Calu3 (cell line): ENCODE measurements at regions of chr5 and their contacts with region 1.

Region 1: GRCh38 chr5:121870489-121870888 is 18.8 kb downstream of the FTMT start:
- DNase-seq: no peak
- H3K4me3 Mint-ChIP-seq: no peak overlapping the region
- H3K27ac Mint-ChIP-seq: no peak overlapping the region
- H3K4me1 Mint-ChIP-seq: no peaks in the 10 kb centered on the region
- H3K27me3 Mint-ChIP-seq: no peaks in the 10 kb centered on the region
- CTCF ChIP-seq: no peak

Region 2: DNA sequence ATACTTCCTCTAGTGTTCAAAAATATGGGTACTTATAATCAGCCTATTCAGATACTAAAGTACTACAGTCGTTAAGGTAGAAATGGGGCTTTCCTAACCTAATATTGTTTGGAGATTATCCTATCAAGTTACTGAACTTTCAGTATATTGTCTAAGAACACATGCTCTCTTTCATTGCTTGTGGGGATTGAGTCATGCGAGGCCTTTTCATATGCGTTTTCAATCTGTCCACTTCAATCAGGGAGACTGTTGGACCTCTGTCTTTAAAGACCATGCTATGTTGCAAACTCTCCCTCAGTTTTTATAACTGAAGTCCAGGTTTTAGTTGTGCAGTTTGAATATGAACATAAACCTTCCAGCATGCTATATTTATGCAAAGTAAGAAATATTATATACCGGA is 1391.4 kb before region 1 on chr5:
- CTCF ChIA-PET with region 1: no interaction called
- intact Hi-C with region 1: loop called (anchors 10 kb)
- DNase-seq: no peak
- H3K4me3 Mint-ChIP-seq: no peak overlapping the region
- H3K27ac Mint-ChIP-seq: no peak overlapping the region
- H3K4me1 Mint-ChIP-seq: peaks cover 16% of the 10 kb centered on the region
- H3K27me3 Mint-ChIP-seq: no peaks in the 10 kb centered on the region
- CTCF ChIP-seq: no peak

Region 3: GRCh38 chr5:120817044-120817985 is 1053.2 kb before region 1 on chr5:
- CTCF ChIA-PET with region 1: no interaction called
- intact Hi-C with region 1: loop called (anchors 1 kb)
- DNase-seq: peak; percentile 36
- H3K4me3 Mint-ChIP-seq: no peak overlapping the region
- H3K27ac Mint-ChIP-seq: no peak overlapping the region
- H3K4me1 Mint-ChIP-seq: no peaks in the 10 kb centered on the region
- H3K27me3 Mint-ChIP-seq: no peaks in the 10 kb centered on the region
- CTCF ChIP-seq: peak; percentile 23

Region 4: GRCh38 chr5:121630402-121630801 is 240.1 kb before region 1 on chr5:
- CTCF ChIA-PET with region 1: no interaction called
- intact Hi-C with region 1: loop called (anchors 10 kb)
- DNase-seq: no peak
- H3K4me3 Mint-ChIP-seq: no peak overlapping the region
- H3K27ac Mint-ChIP-seq: no peak overlapping the region
- H3K4me1 Mint-ChIP-seq: peaks cover 11% of the 10 kb centered on the region
- H3K27me3 Mint-ChIP-seq: no peaks in the 10 kb centered on the region
- CTCF ChIP-seq: no peak

Region 5: DNA sequence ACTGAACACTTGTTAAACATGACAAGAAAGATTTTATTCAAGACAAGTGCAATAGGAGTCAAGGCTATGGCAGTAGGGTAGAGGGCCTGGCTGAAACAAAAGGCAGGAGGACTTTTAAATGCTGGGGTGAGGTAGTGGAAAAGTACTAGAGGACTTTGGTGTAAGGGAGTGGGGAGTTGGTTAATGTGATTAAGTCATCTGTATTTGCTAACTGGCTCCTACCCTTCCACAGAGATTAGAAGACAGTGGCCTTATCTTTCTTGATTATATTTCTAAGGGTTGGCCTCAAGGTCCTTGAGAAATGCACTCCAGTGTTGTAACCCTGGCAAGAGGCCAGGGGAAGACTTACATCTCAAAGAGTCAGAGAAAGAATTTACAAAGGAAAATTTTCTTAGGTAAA is 179.0 kb before region 1 on chr5:
- CTCF ChIA-PET with region 1: no interaction called
- intact Hi-C with region 1: loop called (anchors 5 kb)
- DNase-seq: peak; percentile 32
- H3K4me3 Mint-ChIP-seq: no peak overlapping the region
- H3K27ac Mint-ChIP-seq: peak overlapping the region; percentile 69
- H3K4me1 Mint-ChIP-seq: peaks cover 47% of the 10 kb centered on the region
- H3K27me3 Mint-ChIP-seq: no peaks in the 10 kb centered on the region
- CTCF ChIP-seq: no peak

Region 6: DNA sequence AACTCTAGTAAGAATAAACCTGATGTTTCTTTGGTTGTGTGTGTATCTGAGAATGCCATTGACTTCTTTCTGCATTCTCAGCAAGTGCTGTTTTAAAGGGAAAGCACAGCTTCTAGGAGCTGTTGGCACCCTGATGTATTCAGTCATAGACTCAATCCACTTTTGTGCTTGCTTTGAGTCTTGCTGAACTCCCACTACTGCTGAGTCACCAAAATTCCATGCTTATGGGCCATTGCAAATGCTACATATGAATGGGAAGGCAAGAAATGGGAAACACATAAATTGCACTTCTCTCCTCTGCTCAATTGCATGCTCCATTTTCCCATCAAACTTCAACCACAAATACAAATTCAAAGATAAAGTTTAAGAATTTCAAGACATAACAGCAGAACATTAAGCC is 28.6 kb before region 1 on chr5:
- CTCF ChIA-PET with region 1: no interaction called
- intact Hi-C with region 1: no loop called
- DNase-seq: no peak
- H3K4me3 Mint-ChIP-seq: no peak overlapping the region
- H3K27ac Mint-ChIP-seq: no peak overlapping the region
- H3K4me1 Mint-ChIP-seq: no peaks in the 10 kb centered on the region
- H3K27me3 Mint-ChIP-seq: no peaks in the 10 kb centered on the region
- CTCF ChIP-seq: no peak

Region 7: GRCh38 chr5:122599000-122599399 is 728.5 kb after region 1 on chr5:
- CTCF ChIA-PET with region 1: no interaction called
- intact Hi-C with region 1: no loop called
- DNase-seq: no peak
- H3K4me3 Mint-ChIP-seq: no peak overlapping the region
- H3K27ac Mint-ChIP-seq: no peak overlapping the region
- H3K4me1 Mint-ChIP-seq: no peaks in the 10 kb centered on the region
- H3K27me3 Mint-ChIP-seq: peaks cover 12% of the 10 kb centered on the region
- CTCF ChIP-seq: no peak